H1 (cell line): ENCODE measurements at regions of chr4 and their contacts with region 1.

Region 1: GRCh38 chr4:89226665-89227574 is 80.7 kb downstream of the GPRIN3 start:
- DNase-seq: peak; percentile 67 to 82
- H3K4me3 ChIP-seq: no peak overlapping the region
- H3K27ac ChIP-seq: no peak overlapping the region
- H3K4me1 ChIP-seq: no peaks in the 10 kb centered on the region
- H3K27me3 ChIP-seq: no peaks in the 10 kb centered on the region
- CTCF ChIP-seq: peak; percentile 64 to 88 (median 88)
- EP300 ChIP-seq: no peak
- POLR2A ChIP-seq: no peak
- RAD21 ChIP-seq: peak; percentile 90 to 91

Region 2: DNA sequence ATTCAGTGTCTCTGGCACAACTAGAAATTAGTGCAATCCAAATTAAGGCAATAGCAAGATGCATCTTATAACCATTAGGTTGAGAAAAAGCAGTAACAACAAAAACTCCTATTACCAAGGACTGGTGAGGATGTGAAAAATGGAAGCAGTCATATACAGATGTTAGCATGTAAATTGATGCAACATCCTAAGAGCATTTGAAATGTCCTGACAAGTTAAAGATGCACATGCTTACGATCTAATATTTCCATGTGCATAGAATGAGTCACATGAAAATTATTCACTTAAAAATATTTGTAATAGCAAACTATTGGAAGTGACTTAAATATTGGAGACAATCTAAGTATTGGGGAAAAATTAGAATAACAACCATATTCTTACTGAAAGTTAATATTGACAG is 333.0 kb before region 1 on chr4:
- CTCF ChIA-PET with region 1: no interaction called
- POLR2A ChIA-PET with region 1: no interaction called
- DNase-seq: no peak
- H3K4me3 ChIP-seq: no peak overlapping the region
- H3K27ac ChIP-seq: no peak overlapping the region
- H3K4me1 ChIP-seq: 0 out of 7 replicates have a peak, but pooled peaks cover 0 to 2% (median 0%) of the 10 kb centered on the region in 4 experiments
- H3K27me3 ChIP-seq: peaks cover 0 to 2% (median 0%) of the 10 kb centered on the region in 4 experiments; a peak in 1 of 7 replicates
- CTCF ChIP-seq: no peak
- EP300 ChIP-seq: no peak
- POLR2A ChIP-seq: no peak
- RAD21 ChIP-seq: no peak

Region 3: DNA sequence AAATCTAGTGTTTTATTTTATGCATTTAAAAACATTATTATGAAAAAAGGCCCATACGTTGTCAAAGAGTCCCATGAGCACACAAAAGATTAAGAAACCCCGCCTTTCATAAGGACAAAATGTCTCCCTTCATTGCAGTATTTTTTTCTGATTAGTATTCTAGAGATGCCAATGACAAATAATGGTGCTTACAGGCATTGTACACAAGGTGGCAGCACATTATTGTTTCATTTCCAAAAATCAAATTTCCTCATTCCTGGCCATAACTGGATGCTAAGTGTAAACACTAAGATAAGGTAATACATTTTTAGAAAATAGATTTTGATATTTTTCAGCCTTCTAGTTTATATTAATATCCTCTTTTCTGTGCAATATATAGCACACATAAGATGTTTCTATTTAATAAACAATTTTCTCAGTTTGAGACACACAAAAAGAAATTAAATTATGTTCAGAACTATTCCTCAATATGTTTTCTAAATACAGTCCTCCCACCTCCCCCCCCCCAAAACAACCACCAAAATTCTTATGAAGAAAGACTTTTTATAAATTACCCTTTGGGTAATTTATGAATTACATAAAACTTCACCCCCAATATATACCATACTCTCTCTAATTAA is 67.9 kb before region 1 on chr4:
- CTCF ChIA-PET with region 1: interaction called, 29 read pairs
- POLR2A ChIA-PET with region 1: no interaction called
- DNase-seq: no peak
- H3K4me3 ChIP-seq: no peak overlapping the region
- H3K27ac ChIP-seq: no peak overlapping the region
- H3K4me1 ChIP-seq: no peaks in the 10 kb centered on the region
- H3K27me3 ChIP-seq: no peaks in the 10 kb centered on the region
- CTCF ChIP-seq: peak in 2 of 3 experiments; percentile 37 to 63; a peak in 2 of 4 replicates
- EP300 ChIP-seq: no peak
- POLR2A ChIP-seq: no peak
- RAD21 ChIP-seq: peak; percentile 67 to 72

Region 4: GRCh38 chr4:89216866-89217265 is 10.1 kb before region 1 on chr4:
- CTCF ChIA-PET with region 1: interaction called, 35 read pairs
- POLR2A ChIA-PET with region 1: no interaction called
- DNase-seq: no peak
- H3K4me3 ChIP-seq: no peak overlapping the region
- H3K27ac ChIP-seq: no peak overlapping the region
- H3K4me1 ChIP-seq: no peaks in the 10 kb centered on the region
- H3K27me3 ChIP-seq: no peaks in the 10 kb centered on the region
- CTCF ChIP-seq: no peak
- EP300 ChIP-seq: no peak
- POLR2A ChIP-seq: no peak
- RAD21 ChIP-seq: no peak

Region 5: GRCh38 chr4:89434364-89434988 is 207.6 kb after region 1 on chr4:
- CTCF ChIA-PET with region 1: interaction called, 35 read pairs
- POLR2A ChIA-PET with region 1: no interaction called
- DNase-seq: no peak
- H3K4me3 ChIP-seq: no peak overlapping the region
- H3K27ac ChIP-seq: no peak overlapping the region
- H3K4me1 ChIP-seq: no peaks in the 10 kb centered on the region; a peak in 1 of 7 replicates
- H3K27me3 ChIP-seq: no peaks in the 10 kb centered on the region
- CTCF ChIP-seq: peak in 2 of 3 experiments; percentile 72 to 76; a peak in 3 of 4 replicates
- EP300 ChIP-seq: no peak
- POLR2A ChIP-seq: no peak
- RAD21 ChIP-seq: peak; percentile 87 to 90